ENCODE measurements at regions of chr9 and their contacts with region 1.

Region 1: DNA sequence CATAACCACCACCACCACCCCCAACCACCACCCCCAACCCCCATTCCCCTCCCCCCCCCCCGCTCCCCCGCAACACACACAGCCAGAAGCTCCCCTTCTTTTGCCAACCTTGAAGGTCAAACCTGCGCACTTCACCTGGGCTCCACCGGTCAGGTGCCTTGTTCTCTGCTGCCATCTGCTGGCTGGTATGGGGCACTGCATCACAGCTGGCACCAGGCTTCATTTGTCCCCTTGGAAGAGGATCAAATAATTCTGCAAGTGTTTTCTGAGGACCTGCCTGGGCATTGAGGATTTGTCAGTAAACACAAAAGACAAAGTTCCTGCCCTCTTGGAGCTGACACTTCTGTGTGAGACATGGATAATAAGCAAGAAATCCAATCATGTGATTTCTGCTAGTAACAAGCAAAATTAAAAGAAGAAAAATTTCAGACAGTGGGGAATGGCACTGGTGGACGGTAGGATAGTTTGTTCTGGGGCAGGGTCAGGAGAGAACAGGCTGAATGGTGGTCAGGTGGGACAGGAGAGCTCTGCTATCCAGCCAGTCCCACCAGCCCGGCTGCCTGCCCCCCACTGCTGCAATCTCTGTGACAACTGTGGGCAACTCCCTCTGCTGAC is 55.6 kb upstream of the LMX1B start:
- DNase-seq: peak; percentile 75
- ATAC-seq: peak; percentile 83
- H3K4me3 Mint-ChIP-seq: no peak overlapping the region
- H3K27ac Mint-ChIP-seq: no peak overlapping the region
- H3K4me1 Mint-ChIP-seq: no peaks in the 10 kb centered on the region
- H3K27me3 Mint-ChIP-seq: peaks cover 36% of the 10 kb centered on the region

Region 2: GRCh38 chr9:126514047-126514821 is 43.9 kb before region 1 on chr9:
- CTCF ChIA-PET with region 1: interaction called, 44 read pairs
- DNase-seq: peak; percentile 75
- ATAC-seq: peak; percentile 83
- H3K4me3 Mint-ChIP-seq: no peak overlapping the region
- H3K27ac Mint-ChIP-seq: no peak overlapping the region
- H3K4me1 Mint-ChIP-seq: peaks cover 30% of the 10 kb centered on the region
- H3K27me3 Mint-ChIP-seq: peaks cover 66% of the 10 kb centered on the region

Region 3: DNA sequence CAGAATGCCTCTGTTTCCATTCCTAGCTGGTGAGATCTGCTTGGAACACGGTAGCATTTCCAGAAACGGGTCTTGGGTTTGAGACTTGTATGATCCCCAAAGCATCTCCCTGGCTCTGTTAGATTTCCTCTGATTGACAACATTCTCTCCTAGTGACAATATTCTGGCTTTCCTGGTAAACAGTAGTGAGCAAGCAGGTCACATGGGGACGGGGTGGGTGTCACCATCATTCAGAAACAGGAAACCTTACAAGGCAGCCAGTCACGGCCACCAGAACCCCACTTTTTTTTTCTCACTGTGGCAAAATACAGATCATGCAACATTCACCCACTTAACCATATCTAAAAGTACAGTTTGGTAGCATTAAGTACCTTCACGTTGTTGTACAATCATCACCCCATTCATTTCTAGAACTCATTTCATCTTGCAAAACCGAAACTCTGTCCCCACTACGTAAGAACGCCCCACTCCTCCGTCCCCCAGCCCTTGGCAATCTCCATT is 34.5 kb before region 1 on chr9:
- CTCF ChIA-PET with region 1: interaction called, 41 read pairs
- DNase-seq: peak; percentile 78
- ATAC-seq: peak; percentile 86
- H3K4me3 Mint-ChIP-seq: peak overlapping the region; percentile 73
- H3K27ac Mint-ChIP-seq: peak overlapping the region; percentile 82
- H3K4me1 Mint-ChIP-seq: peaks cover 39% of the 10 kb centered on the region
- H3K27me3 Mint-ChIP-seq: peaks cover 46% of the 10 kb centered on the region

Region 4: DNA sequence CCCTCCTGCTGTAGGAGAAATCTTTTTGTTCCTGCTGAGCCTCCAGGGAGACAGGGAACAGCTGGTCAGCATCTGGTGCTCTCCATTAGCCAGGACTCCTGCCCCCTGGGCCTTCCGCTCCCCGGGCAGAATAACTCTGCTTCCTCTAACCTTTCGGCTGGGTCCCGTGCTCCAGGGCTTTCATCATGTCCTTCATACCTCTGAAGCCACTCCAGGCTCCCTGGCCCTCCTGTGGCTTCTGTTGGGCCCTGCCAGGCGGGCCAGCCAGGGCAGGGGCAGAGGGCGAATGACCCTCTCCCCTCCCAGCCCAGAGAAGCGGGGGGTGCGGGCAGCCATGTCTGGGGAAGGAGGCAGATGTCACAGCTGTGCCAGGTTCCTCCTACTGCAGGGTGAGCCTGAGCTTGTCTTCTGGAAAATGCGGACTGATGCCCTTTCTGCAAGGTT is 26.1 kb before region 1 on chr9:
- CTCF ChIA-PET with region 1: interaction called, 13 read pairs
- DNase-seq: no peak
- ATAC-seq: no peak
- H3K4me3 Mint-ChIP-seq: no peak overlapping the region
- H3K27ac Mint-ChIP-seq: no peak overlapping the region
- H3K4me1 Mint-ChIP-seq: no peaks in the 10 kb centered on the region
- H3K27me3 Mint-ChIP-seq: peaks cover 49% of the 10 kb centered on the region

Region 5: GRCh38 chr9:126538550-126538949 is 19.6 kb before region 1 on chr9:
- CTCF ChIA-PET with region 1: interaction called, 13 read pairs
- DNase-seq: no peak
- ATAC-seq: no peak
- H3K4me3 Mint-ChIP-seq: no peak overlapping the region
- H3K27ac Mint-ChIP-seq: no peak overlapping the region
- H3K4me1 Mint-ChIP-seq: no peaks in the 10 kb centered on the region
- H3K27me3 Mint-ChIP-seq: peaks cover 24% of the 10 kb centered on the region

Measured in activated CD8-positive, alpha-beta memory T cell treated with anti-CD3 and anti-CD28 coated beads, Interleukin-2, amount 10 ng/mL, durations not matched to agents 7 days and 5 days (primary cell).